Breast epithelium (tissue), 4 donors: ENCODE measurements at regions of chr2 and their contacts with region 1.

Region 1: GRCh38 chr2:69464575-69464974 is 27.3 kb upstream of the NFU1 start:
- DNase-seq: no peak
- H3K4me3 ChIP-seq: no peak overlapping the region
- H3K27ac ChIP-seq: peak overlapping the region in 1 of 2 donors; percentile 16
- H3K4me1 ChIP-seq: no peaks in the 10 kb centered on the region
- H3K27me3 ChIP-seq: no peaks in the 10 kb centered on the region
- CTCF ChIP-seq: no peak
- POLR2A ChIP-seq: no peak

Region 2: GRCh38 chr2:69022548-69022947 is 442.0 kb before region 1 on chr2:
- intact Hi-C with region 1: loop called (anchors 5 kb)
- DNase-seq: no peak
- H3K4me3 ChIP-seq: no peak overlapping the region
- H3K27ac ChIP-seq: no peak overlapping the region
- H3K4me1 ChIP-seq: peaks cover 0 to 4% of the 10 kb centered on the region in 2 donors
- H3K27me3 ChIP-seq: no peaks in the 10 kb centered on the region
- CTCF ChIP-seq: no peak
- POLR2A ChIP-seq: no peak